Adrenal gland (tissue), 19 donors: ENCODE measurements at regions of chr10 and their contacts with region 1.

Region 1: DNA sequence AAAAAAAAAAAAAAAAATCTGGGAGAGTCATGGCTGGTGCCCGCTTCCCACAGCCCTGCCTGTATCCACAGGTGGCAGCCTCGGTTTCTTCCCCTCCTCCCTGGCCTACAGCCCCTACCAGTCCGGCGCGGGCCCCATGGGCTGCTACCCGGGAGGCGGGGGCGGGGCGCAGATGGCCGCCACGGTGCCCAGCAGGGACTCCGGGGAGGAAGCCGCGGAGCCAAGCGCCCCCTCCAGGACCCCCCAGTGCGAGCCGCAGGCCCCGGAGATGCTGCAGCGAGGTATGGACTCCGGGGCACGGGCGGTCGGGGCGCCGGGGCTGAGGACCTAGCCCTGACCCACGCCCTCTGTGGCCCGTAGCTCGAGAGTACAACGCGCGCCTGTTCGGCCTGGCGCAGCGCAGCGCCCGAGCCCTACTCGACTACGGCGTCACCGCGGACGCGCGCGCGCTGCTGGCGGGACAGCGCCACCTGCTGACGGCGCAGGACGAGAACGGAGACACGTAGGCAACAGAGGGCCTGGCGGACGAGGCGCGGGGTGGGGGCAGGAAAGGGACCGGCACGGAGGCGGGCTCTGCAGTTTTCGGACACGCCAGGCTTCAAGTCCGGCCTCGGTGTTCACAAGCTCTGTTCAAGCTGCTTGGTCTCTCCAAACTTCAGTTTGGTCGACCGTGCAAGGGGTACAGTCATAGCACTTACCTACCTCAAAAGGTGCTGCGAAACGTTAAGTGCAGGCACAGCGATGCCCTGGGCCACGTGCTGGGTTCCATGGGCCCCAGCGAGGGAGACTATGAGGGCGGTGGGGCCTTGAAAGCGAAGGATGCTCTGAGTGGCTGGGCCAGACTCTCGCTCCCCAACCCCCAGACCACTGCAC is 3.9 kb downstream of the NFKB2 start:
- DNase-seq: peak; percentile 86 to 95 (median 90)
- H3K4me3 ChIP-seq: peak overlapping the region in 2 of 4 donors; percentile 63 to 70
- H3K27ac ChIP-seq: peak overlapping the region; percentile 48 to 94 (median 92)
- H3K4me1 ChIP-seq: peaks cover 5 to 23% of the 10 kb centered on the region in 2 donors
- H3K27me3 ChIP-seq: no peaks in the 10 kb centered on the region
- CTCF ChIP-seq: peak; percentile 78 to 98 (median 90)
- POLR2A ChIP-seq: peak; percentile 55 to 81

Region 2: DNA sequence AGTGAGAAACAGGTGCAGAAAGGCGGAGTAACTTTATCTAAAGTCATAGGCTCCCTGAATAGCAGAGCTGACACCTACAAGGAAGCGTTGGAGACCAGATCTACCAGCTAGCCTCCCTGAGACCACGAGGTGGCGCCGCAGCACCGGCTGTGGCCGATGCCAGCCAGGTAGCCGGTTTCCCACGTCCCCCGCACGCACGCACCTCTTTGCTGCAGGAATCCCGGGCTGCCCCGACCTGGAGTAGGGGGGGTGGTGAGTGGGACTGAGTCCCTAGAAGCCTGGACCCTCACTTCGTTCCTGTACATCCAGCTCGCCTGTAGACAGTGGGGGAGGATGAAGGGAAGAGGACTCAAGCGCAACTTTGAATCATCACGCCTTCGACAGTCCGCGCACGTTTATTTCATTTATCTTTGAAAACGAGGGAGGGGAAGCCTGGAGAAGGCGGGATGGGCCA is 169.6 kb before region 1 on chr10:
- intact Hi-C with region 1: loop called in 1 of 2 experiments (anchors 5 kb)
- DNase-seq: peak; percentile 73 to 91 (median 86)
- H3K4me3 ChIP-seq: peak overlapping the region in 1 of 4 donors; percentile 72
- H3K27ac ChIP-seq: no peak overlapping the region
- H3K4me1 ChIP-seq: peaks cover 24 to 25% of the 10 kb centered on the region in 2 donors
- H3K27me3 ChIP-seq: peaks cover 14% of the 10 kb centered on the region
- CTCF ChIP-seq: peak; percentile 83 to 98 (median 96)
- POLR2A ChIP-seq: no peak

Region 3: GRCh38 chr10:102476466-102477141 is 77.2 kb after region 1 on chr10:
- intact Hi-C with region 1: loop called in 1 of 2 experiments (anchors 5 kb)
- DNase-seq: no peak
- H3K4me3 ChIP-seq: no peak overlapping the region
- H3K27ac ChIP-seq: no peak overlapping the region
- H3K4me1 ChIP-seq: no peaks in the 10 kb centered on the region
- H3K27me3 ChIP-seq: no peaks in the 10 kb centered on the region
- CTCF ChIP-seq: no peak
- POLR2A ChIP-seq: no peak